Astrocyte of the cerebellum (primary cell): ENCODE measurements at regions of chr2 and their contacts with region 1.

Region 1: DNA sequence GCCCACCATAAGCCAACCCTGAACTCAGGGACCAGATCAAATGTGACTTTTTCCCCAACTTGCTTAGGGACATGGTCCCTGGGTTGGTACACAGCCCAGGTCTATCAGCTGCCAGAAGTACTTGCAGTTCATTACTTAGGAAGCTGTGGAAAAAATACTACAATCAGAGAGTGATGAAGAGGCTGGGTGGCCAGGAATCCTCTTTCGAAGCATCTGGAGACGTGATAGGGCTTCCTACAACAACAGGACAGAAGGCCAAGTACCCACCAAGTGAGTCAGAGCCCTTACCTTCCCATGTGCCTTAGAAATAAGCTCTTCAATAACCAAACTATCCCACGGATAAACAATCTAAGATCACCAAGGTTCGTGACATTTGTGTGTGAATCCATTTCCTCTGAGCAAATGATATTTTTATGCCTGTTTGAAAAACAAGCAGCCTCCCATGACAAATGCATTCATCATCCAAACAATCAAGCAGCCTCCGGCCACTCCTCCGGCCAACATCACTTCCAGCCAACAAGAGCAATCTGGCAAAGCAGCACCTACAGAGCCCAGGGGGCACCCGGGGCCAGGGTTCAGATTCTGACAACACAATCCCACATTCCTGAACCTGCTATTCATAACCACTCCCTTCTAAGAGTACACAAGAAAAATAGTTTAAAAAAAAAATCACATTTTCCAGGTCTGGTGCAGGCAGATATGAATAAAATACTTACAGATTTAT is 26.4 kb downstream of the TBC1D8 start:
- DNase-seq: no peak
- H3K4me3 ChIP-seq: no peak overlapping the region
- CTCF ChIP-seq: no peak

Region 2: GRCh38 chr2:101064868-101065549 is 59.8 kb before region 1 on chr2:
- in situ Hi-C with region 1: loop called (anchors 5 kb)
- DNase-seq: peak; percentile 4
- H3K4me3 ChIP-seq: no peak overlapping the region
- CTCF ChIP-seq: no peak

Region 3: DNA sequence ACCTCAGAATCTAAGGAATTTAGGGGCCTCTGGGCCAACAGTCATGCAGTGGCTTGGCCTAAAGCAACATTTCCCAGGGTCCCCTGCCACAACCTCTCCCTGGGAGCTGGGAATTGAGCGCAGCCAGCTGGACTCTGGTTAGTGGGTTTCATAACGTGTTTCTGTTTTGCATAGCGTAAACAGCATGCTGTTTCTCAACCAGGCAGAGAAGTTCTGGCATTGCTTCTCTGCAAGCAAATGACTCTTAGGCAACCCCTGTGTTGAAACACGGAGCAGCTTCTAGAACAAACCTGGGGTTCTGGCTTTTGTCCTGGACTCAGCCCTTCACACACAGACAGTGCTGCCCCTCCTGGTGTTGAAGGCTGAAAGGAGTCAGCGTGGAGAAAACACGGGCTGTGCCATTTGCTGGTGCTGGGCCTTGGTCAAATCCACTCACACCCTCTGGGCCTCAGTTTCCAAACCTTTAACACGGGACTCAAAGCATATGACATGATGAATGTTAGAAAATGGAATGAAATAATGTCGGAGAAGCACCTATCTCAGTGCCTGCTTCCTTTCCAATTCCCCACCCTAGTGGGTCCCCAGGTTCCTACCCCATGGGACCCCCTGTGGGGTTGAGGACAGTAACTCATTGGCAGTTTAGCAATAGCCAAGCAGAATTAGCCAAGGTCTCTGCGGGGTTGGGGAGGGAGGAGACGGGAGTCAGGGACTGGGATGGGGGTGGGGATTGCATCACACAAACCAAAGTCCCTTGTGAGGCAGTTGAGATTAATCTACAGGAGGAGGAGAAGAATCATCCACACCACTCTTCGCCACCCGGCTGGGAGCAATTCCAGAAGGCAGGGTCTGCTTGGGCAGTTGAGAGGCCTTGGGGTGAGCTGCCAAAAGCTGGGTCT is 836.7 kb after region 1 on chr2:
- in situ Hi-C with region 1: no loop called
- DNase-seq: peak; percentile 100
- H3K4me3 ChIP-seq: no peak overlapping the region
- CTCF ChIP-seq: peak; percentile 51